ENCODE measurements at regions of chr12 and their contacts with region 1.

Region 1: GRCh38 chr12:103833891-103834290 is 7.1 kb downstream of the NT5DC3 start:
- DNase-seq: peak in 1 of 2 experiments; percentile 10
- H3K4me3 ChIP-seq: no peak overlapping the region
- H3K27ac ChIP-seq: no peak overlapping the region
- H3K4me1 ChIP-seq: peaks cover 0 to 3% (median 0%) of the 10 kb centered on the region in 4 experiments; a peak in 1 of 7 replicates
- H3K27me3 ChIP-seq: no peaks in the 10 kb centered on the region
- CTCF ChIP-seq: peak; percentile 40 to 55 (median 46)
- EP300 ChIP-seq: no peak
- POLR2A ChIP-seq: no peak
- RAD21 ChIP-seq: peak; percentile 36 to 39; a peak in 3 of 4 replicates

Region 2: DNA sequence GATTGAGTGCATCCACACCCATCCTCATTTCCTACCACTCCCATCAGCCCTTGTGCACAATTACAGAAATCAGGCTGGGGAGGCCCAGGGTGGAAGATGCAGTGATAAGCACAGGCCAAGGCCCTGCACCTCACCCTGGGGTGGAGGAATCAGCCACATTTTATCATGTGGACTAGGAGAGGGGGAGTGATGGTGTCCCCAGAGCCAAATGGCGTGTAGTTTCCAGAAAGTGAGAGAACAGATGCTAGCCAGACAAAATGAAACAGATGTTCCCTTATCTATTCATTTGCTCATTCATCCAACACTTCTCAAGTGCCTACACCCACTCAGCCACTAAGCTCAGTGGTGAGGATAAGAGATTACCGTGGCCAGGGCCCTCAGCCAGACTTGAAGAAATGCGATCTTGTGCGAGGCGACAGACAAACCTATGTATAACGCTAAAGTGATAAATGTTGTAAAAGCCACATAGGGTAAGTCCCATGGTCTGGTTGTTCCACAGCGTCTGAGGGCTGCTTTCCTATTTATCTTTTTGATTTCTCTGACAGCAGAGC is 153.2 kb before region 1 on chr12:
- CTCF ChIA-PET with region 1: no interaction called
- POLR2A ChIA-PET with region 1: no interaction called
- DNase-seq: no peak
- H3K4me3 ChIP-seq: no peak overlapping the region
- H3K27ac ChIP-seq: no peak overlapping the region
- H3K4me1 ChIP-seq: peaks cover 0 to 4% (median 1%) of the 10 kb centered on the region in 4 experiments; a peak in 2 of 7 replicates
- H3K27me3 ChIP-seq: no peaks in the 10 kb centered on the region
- CTCF ChIP-seq: no peak
- EP300 ChIP-seq: no peak
- POLR2A ChIP-seq: no peak
- RAD21 ChIP-seq: no peak

Region 3: DNA sequence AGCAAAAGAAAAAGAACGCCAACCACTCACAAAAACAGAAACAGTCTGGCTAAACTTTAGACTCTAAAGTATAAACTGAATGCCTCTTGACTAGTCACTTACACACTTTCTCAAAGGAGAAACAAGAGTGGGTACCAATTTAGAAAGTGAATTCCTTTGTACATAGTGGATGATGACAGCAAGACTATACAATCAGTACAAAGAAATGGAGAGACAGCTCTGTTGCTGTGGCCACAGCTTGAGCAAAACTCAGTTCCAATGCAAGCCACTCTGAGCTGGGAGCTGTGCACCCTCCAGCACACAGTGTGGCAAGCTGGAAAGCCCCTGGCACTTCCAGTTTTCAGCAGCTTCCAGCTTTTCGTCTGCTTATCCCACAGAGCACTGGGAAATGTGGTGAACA is 14.6 kb before region 1 on chr12:
- CTCF ChIA-PET with region 1: interaction called, 11 read pairs
- POLR2A ChIA-PET with region 1: no interaction called
- DNase-seq: no peak
- H3K4me3 ChIP-seq: no peak overlapping the region
- H3K27ac ChIP-seq: no peak overlapping the region
- H3K4me1 ChIP-seq: no peaks in the 10 kb centered on the region
- H3K27me3 ChIP-seq: no peaks in the 10 kb centered on the region
- CTCF ChIP-seq: no peak
- EP300 ChIP-seq: no peak
- POLR2A ChIP-seq: no peak
- RAD21 ChIP-seq: no peak

Region 4: GRCh38 chr12:103858335-103858734 is 24.4 kb after region 1 on chr12:
- CTCF ChIA-PET with region 1: no interaction called
- POLR2A ChIA-PET with region 1: no interaction called
- DNase-seq: no peak
- H3K4me3 ChIP-seq: no peak overlapping the region
- H3K27ac ChIP-seq: no peak overlapping the region
- H3K4me1 ChIP-seq: no peaks in the 10 kb centered on the region
- H3K27me3 ChIP-seq: no peaks in the 10 kb centered on the region
- CTCF ChIP-seq: no peak
- EP300 ChIP-seq: no peak
- POLR2A ChIP-seq: no peak
- RAD21 ChIP-seq: no peak